GM12878 (cell line): ENCODE measurements at regions of chr3 and their contacts with region 1.

Region 1: GRCh38 chr3:100089812-100090668 is 24.3 kb downstream of the FILIP1L start:
- DNase-seq: no peak
- ATAC-seq: peak; percentile 90
- H3K4me3 ChIP-seq: no peak overlapping the region
- H3K27ac ChIP-seq: no peak overlapping the region
- H3K4me1 ChIP-seq: peaks cover 18% of the 10 kb centered on the region
- H3K27me3 ChIP-seq: no peaks in the 10 kb centered on the region
- CTCF ChIP-seq: peak; percentile 32 to 73 (median 72)
- EP300 ChIP-seq: no peak
- POLR2A ChIP-seq: no peak
- RAD21 ChIP-seq: peak; percentile 67

Region 2: GRCh38 chr3:99909714-99910494 is 180.1 kb before region 1 on chr3:
- CTCF ChIA-PET with region 1: no interaction called
- POLR2A ChIA-PET with region 1: no interaction called
- RAD21 ChIA-PET with region 1: no interaction called
- SMC1A ChIA-PET with region 1: no interaction called
- in situ Hi-C with region 1: no loop called
- intact Hi-C with region 1: no loop called
- DNase-seq: no peak
- ATAC-seq: peak; percentile 35
- H3K4me3 ChIP-seq: no peak overlapping the region
- H3K27ac ChIP-seq: no peak overlapping the region
- H3K4me1 ChIP-seq: no peaks in the 10 kb centered on the region
- H3K27me3 ChIP-seq: no peaks in the 10 kb centered on the region
- CTCF ChIP-seq: no peak
- EP300 ChIP-seq: no peak
- POLR2A ChIP-seq: no peak
- RAD21 ChIP-seq: no peak

Region 3: GRCh38 chr3:100068826-100069225 is 21.2 kb before region 1 on chr3:
- CTCF ChIA-PET with region 1: interaction called, 26 read pairs
- POLR2A ChIA-PET with region 1: no interaction called
- RAD21 ChIA-PET with region 1: interaction called, 8 read pairs
- SMC1A ChIA-PET with region 1: interaction called, 31 read pairs
- in situ Hi-C with region 1: no loop called
- intact Hi-C with region 1: no loop called
- DNase-seq: peak; percentile 33
- ATAC-seq: peak; percentile 96
- H3K4me3 ChIP-seq: no peak overlapping the region
- H3K27ac ChIP-seq: no peak overlapping the region
- H3K4me1 ChIP-seq: peaks cover 16% of the 10 kb centered on the region
- H3K27me3 ChIP-seq: no peaks in the 10 kb centered on the region
- CTCF ChIP-seq: peak; percentile 74 to 79 (median 79)
- EP300 ChIP-seq: no peak
- POLR2A ChIP-seq: no peak
- RAD21 ChIP-seq: peak; percentile 92

Region 4: DNA sequence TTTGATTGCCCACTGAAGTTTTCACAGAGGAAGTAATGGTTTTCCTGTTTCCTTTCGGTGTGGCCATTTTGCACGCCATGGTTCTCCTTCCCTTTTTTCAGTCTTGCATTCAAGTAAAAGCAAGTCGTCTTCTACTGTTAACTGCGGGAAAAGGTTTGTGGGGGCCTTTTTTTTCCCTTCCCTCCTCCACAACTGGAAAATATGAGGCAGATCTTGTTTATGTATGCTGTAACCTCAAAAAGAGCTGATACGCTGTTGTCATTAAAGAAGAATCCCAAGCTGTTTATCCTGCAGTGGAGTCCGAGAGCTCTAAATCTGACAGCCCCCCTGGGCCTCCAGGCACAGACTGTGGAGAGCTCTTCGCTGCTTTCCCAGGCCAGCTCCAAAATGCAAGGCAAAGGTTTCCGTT is 16.1 kb before region 1 on chr3:
- CTCF ChIA-PET with region 1: interaction called, 26 read pairs
- POLR2A ChIA-PET with region 1: no interaction called
- RAD21 ChIA-PET with region 1: interaction called, 8 read pairs
- SMC1A ChIA-PET with region 1: interaction called, 31 read pairs
- in situ Hi-C with region 1: no loop called
- intact Hi-C with region 1: no loop called
- DNase-seq: no peak
- ATAC-seq: peak; percentile 12; the same call in 2 of the 3 replicates
- H3K4me3 ChIP-seq: peak overlapping the region; percentile 48; the same call in 1 of the 2 replicates
- H3K27ac ChIP-seq: no peak overlapping the region
- H3K4me1 ChIP-seq: peaks cover 21% of the 10 kb centered on the region
- H3K27me3 ChIP-seq: no peaks in the 10 kb centered on the region
- CTCF ChIP-seq: no peak
- EP300 ChIP-seq: peak; percentile 14 to 39; a peak in 2 of 4 replicates
- POLR2A ChIP-seq: no peak
- RAD21 ChIP-seq: no peak

Region 5: DNA sequence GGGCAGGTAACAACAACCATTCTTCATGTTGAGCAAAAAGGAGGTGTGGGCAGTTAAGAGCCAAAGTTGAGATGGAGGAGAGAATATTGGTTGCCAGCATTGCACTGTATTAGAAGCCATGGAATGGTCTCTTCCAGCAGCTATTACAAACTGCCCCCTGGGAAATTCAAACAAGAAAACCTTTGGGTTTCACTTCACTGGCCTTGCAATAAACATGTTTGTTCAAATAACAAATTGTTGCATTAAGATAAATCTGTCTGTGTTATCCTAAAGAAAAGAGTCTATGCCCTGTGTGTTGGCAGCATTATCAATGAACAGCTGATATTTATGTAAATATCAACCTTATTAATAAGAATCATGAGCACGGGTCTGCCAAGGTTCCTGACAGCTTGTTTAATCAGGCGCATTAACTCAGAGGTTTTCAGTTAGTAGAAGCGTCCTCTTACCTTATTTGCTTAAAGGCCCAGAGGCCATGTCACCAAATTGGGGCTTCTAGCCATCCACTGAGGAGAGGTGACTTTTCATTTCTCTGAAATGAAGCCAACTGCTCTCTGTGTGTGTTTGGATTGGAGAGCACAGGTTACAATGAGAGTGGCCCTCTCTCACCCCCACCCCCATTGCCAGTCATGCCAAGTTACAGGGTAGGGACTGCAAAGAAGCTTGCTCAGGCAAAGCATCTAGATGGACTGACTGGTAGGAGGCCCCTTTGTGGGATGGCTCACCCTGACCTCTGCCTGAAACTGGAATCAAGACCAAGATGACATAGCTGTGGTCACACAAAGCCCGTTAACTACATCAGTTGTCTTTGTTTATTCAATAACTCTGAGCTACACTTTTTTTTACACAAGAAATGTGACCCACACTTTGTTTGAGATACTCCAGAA is 13.8 kb after region 1 on chr3:
- CTCF ChIA-PET with region 1: interaction called, 15 read pairs
- POLR2A ChIA-PET with region 1: no interaction called
- RAD21 ChIA-PET with region 1: interaction called, 4 read pairs
- SMC1A ChIA-PET with region 1: interaction called, 27 read pairs
- in situ Hi-C with region 1: no loop called
- intact Hi-C with region 1: no loop called
- DNase-seq: peak; percentile 56
- ATAC-seq: peak; percentile 96
- H3K4me3 ChIP-seq: peak overlapping the region; percentile 11; the same call in 1 of the 2 replicates
- H3K27ac ChIP-seq: peak overlapping the region; percentile 75
- H3K4me1 ChIP-seq: peaks cover 33% of the 10 kb centered on the region
- H3K27me3 ChIP-seq: no peaks in the 10 kb centered on the region
- CTCF ChIP-seq: no peak
- EP300 ChIP-seq: peak; percentile 54 to 67; a peak in 3 of 4 replicates
- POLR2A ChIP-seq: no peak
- RAD21 ChIP-seq: peak; percentile 10; the same call in 1 of the 2 replicates